Posterior cingulate gyrus (tissue), 11 donors: ENCODE measurements at regions of chr16 and their contacts with region 1.

Region 1: GRCh38 chr16:75471723-75472633 is 7.5 kb upstream of the TMEM170A start:
- DNase-seq: peak in 7 of 10 donors; percentile 50 to 89 (median 64)

Region 2: GRCh38 chr16:75519881-75520280 is 47.9 kb after region 1 on chr16:
- intact Hi-C with region 1: loop called (anchors 1 kb)
- DNase-seq: no peak

Region 3: GRCh38 chr16:75532142-75532765 is 60.3 kb after region 1 on chr16:
- intact Hi-C with region 1: no loop called
- DNase-seq: no peak

Region 4: DNA sequence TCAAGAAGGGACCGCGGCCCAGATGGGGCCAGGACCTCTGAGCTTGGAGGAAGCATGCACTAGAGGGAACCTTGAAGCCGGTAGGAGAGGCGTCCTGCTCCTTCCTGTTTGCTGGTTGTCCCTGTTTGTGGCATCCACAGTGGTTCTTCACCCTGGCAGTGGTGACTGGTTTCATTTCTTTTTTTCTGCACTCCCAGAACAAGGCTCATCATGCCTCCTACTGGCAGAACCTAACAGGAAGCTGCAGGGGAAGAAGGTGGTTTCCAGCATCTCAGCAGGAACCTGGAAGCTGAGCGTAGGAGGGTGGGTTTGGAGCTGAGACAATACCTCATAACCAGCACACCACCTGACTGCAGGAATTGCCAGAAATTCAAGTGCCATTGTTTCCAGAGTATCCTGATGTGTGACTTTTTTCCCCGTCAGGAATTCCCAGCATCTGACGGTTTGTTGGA is 78.3 kb after region 1 on chr16:
- intact Hi-C with region 1: loop called (anchors 2 kb)
- DNase-seq: peak in 5 of 10 donors; percentile 33 to 89 (median 37)

Region 5: GRCh38 chr16:75566040-75566810 is 94.2 kb after region 1 on chr16 and contains the start of gene GABARAPL2:
- intact Hi-C with region 1: no loop called
- DNase-seq: peak; percentile 75 to 98 (median 85)